MCF 10A (cell line): ENCODE measurements at regions of chr6 and their contacts with region 1.

Region 1: GRCh38 chr6:75296811-75297779 is 12.5 kb upstream of the TMEM30A start:
- DNase-seq: peak; percentile 72
- H3K4me3 Mint-ChIP-seq: no peak overlapping the region
- H3K27ac Mint-ChIP-seq: no peak overlapping the region
- H3K4me1 Mint-ChIP-seq: no peaks in the 10 kb centered on the region
- H3K27me3 Mint-ChIP-seq: no peaks in the 10 kb centered on the region
- CTCF ChIP-seq: peak; percentile 56

Region 2: GRCh38 chr6:74631564-74631963 is 665.5 kb before region 1 on chr6:
- CTCF ChIA-PET with region 1: no interaction called
- POLR2A ChIA-PET with region 1: no interaction called
- intact Hi-C with region 1: no loop called
- DNase-seq: no peak
- H3K4me3 Mint-ChIP-seq: no peak overlapping the region
- H3K27ac Mint-ChIP-seq: no peak overlapping the region
- H3K4me1 Mint-ChIP-seq: no peaks in the 10 kb centered on the region
- H3K27me3 Mint-ChIP-seq: no peaks in the 10 kb centered on the region
- CTCF ChIP-seq: no peak

Region 3: DNA sequence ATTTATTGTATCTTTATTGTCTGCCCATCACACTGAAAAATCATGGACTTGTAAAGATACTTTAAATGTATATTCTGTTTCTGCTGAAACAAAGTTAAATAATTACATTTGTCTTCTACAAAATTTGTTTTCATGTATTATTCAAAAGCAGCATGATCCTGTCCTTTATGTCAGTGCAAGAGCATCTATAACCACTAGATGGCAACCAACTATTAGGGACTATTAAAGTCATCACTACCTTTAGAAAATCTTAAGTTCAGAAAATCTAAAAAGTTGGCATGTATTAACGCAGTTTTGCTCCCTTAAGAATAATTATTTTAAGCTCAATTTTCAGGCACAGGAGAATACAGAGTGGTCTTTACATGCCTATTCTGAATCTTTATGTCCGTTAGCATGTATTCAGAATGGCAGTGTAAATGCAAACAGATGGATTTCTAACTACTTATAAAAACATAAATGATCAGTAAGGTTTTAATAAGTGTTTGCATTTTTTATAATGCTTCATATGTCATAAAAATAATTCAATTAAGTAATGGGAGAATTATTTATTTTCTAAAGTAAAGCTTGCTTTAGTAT is 30.3 kb before region 1 on chr6:
- CTCF ChIA-PET with region 1: interaction called, 18 read pairs
- POLR2A ChIA-PET with region 1: interaction called, 4 read pairs
- intact Hi-C with region 1: loop called (anchors 1 kb)
- DNase-seq: peak; percentile 65
- H3K4me3 Mint-ChIP-seq: no peak overlapping the region
- H3K27ac Mint-ChIP-seq: no peak overlapping the region
- H3K4me1 Mint-ChIP-seq: peaks cover 12% of the 10 kb centered on the region
- H3K27me3 Mint-ChIP-seq: no peaks in the 10 kb centered on the region
- CTCF ChIP-seq: peak; percentile 55

Region 4: GRCh38 chr6:75284632-75285286 is 12.3 kb before region 1 on chr6 and contains the start of gene TMEM30A:
- CTCF ChIA-PET with region 1: interaction called, 3 read pairs
- POLR2A ChIA-PET with region 1: interaction called, 18 read pairs
- intact Hi-C with region 1: no loop called
- DNase-seq: peak; percentile 99
- H3K4me3 Mint-ChIP-seq: no peak within 1 kb of the TSS
- H3K27ac Mint-ChIP-seq: no peak within 1 kb of the TSS
- H3K4me1 Mint-ChIP-seq: peaks cover 21% of the 10 kb centered on the region
- H3K27me3 Mint-ChIP-seq: no peaks in the 10 kb centered on the region
- CTCF ChIP-seq: no peak
- total RNA-seq, gene TMEM30A: 53.7 and 71.4 TPM in 2 replicates

Region 5: GRCh38 chr6:75368151-75368779 is 71.2 kb after region 1 on chr6:
- CTCF ChIA-PET with region 1: interaction called, 4 read pairs
- POLR2A ChIA-PET with region 1: no interaction called
- intact Hi-C with region 1: loop called (anchors 1 kb)
- DNase-seq: peak; percentile 62
- H3K4me3 Mint-ChIP-seq: no peak overlapping the region
- H3K27ac Mint-ChIP-seq: no peak overlapping the region
- H3K4me1 Mint-ChIP-seq: no peaks in the 10 kb centered on the region
- H3K27me3 Mint-ChIP-seq: no peaks in the 10 kb centered on the region
- CTCF ChIP-seq: peak; percentile 31

Region 6: DNA sequence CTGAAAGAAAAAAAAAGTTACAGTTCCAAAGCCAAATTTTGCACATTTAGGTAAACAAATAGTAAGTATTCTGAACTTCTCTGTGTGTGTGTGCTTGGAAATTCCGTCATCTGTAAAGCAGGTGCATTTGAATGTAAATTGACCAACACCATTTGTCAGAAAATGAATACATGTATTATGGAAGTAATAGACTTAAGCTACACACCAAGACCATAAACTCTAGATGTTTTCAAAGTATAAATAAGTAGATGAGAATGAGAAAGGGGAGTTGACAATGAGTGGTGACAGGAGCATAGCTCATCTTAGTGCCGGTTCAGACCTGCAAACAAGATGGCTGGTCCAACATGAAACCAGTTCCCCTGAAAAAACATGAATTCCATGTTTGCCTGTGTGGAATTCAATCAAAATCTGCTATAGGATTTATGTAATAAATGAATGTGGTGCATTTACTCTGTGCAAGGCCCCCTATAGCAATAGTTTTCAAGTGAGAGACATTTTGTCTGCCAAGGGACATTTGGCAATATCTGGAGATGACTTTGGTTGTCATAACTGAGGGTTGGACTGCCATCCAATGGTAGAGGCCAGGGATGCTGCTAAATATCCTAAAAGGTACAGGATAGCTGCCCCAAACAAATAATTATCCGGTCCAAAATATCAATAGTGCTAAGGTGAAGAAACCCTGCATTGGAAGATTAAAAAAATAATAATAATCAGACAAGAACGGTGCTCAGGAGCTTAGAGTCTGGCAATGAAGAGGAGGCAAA is 207.6 kb after region 1 on chr6:
- CTCF ChIA-PET with region 1: interaction called, 22 read pairs
- POLR2A ChIA-PET with region 1: no interaction called
- intact Hi-C with region 1: no loop called
- DNase-seq: peak; percentile 29
- H3K4me3 Mint-ChIP-seq: no peak overlapping the region
- H3K27ac Mint-ChIP-seq: no peak overlapping the region
- H3K4me1 Mint-ChIP-seq: no peaks in the 10 kb centered on the region
- H3K27me3 Mint-ChIP-seq: no peaks in the 10 kb centered on the region
- CTCF ChIP-seq: no peak